Calu3 (cell line): ENCODE measurements at regions of chr17 and their contacts with region 1.

Region 1: DNA sequence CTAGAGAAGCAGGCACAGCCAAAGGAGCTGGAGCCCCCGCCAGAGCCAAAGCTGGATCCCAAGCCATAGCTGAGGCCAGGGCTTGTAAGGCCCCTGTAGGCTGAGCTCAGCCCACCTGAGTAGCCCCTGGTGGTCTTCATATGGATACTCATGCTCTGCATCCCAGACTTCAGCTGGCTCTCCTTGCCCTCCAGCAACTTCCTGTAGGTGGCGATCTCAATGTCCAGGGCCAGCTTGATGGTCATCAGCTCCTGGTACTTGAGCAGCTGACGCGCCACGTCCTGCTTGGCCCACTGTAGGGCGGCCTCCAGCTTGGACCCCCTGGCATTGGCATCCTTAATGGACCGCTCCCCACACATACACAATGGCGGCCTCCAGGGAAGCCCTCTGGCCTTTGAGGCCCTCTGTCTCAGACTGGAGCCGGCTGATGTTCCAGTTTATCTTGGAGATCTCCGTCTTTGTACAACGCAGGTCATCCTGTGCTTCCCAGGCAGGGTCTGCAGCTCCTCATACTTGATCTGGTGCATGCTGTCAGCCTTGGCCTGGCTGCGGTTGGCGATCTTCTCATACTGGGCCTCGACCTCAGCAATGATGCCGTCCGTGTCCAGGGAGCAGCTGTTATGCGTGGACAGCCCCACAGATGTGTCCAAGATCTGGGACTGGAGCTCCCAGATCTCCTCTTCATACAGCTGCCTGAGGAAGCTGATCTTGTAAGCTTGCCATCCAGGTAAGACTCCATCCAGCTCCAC is 28.9 kb downstream of the IKZF3 start:
- DNase-seq: peak; percentile 79
- H3K4me3 Mint-ChIP-seq: no peak overlapping the region
- H3K27ac Mint-ChIP-seq: no peak overlapping the region
- H3K4me1 Mint-ChIP-seq: no peaks in the 10 kb centered on the region
- H3K27me3 Mint-ChIP-seq: no peaks in the 10 kb centered on the region
- CTCF ChIP-seq: no peak

Region 2: GRCh38 chr17:39631403-39631802 is 203.8 kb before region 1 on chr17:
- CTCF ChIA-PET with region 1: interaction called, 272 read pairs
- intact Hi-C with region 1: no loop called
- DNase-seq: no peak
- H3K4me3 Mint-ChIP-seq: peak overlapping the region; percentile 0
- H3K27ac Mint-ChIP-seq: peak overlapping the region; percentile 0
- H3K4me1 Mint-ChIP-seq: peaks cover 34% of the 10 kb centered on the region
- H3K27me3 Mint-ChIP-seq: peaks cover 59% of the 10 kb centered on the region
- CTCF ChIP-seq: no peak

Region 3: DNA sequence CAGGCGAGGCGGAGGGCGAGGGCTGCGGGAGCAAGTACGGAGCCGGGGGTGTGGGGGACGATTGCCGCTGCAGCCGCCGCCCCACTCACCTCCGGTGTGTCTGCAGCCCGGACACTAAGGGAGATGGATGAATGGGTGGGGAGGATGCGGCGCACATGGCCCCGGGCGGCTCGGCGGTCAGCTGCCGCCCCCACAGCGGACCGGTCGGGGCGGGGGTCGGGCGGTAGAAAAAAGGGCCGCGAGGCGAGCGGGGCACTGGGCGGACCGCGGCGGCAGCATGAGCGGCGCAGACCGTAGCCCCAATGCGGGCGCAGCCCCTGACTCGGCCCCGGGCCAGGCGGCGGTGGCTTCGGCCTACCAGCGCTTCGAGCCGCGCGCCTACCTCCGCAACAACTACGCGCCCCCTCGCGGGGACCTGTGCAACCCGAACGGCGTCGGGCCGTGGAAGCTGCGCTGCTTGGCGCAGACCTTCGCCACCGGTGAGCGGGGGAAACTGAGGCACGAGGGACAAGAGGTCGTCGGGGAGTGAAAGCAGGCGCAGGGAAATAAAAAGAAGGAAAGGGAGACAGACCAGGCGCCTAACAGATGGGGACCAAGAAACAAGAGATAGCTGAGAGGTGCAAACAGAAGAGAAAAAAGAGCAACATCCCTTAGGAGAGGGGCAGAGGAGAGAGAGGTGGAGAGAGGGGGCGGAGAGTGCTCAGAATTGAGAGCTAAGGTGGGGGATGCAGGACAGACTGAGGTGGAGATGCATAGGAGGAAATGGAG is 166.8 kb before region 1 on chr17 and contains the start of gene PNMT:
- CTCF ChIA-PET with region 1: interaction called, 109 read pairs
- intact Hi-C with region 1: no loop called
- DNase-seq: peak; percentile 100
- H3K4me3 Mint-ChIP-seq: peak within 1 kb of the TSS; percentile 24
- H3K27ac Mint-ChIP-seq: peak within 1 kb of the TSS; percentile 0
- H3K4me1 Mint-ChIP-seq: peaks cover 65% of the 10 kb centered on the region
- H3K27me3 Mint-ChIP-seq: peaks cover 69% of the 10 kb centered on the region
- CTCF ChIP-seq: no peak
- total RNA-seq, gene PNMT: 1.3 and 3.2 TPM in 2 replicates

Region 4: DNA sequence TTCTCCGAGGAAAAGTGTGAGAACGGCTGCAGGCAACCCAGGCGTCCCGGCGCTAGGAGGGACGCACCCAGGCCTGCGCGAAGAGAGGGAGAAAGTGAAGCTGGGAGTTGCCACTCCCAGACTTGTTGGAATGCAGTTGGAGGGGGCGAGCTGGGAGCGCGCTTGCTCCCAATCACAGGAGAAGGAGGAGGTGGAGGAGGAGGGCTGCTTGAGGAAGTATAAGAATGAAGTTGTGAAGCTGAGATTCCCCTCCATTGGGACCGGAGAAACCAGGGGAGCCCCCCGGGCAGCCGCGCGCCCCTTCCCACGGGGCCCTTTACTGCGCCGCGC is 135.4 kb before region 1 on chr17 and contains the start of gene ERBB2:
- CTCF ChIA-PET with region 1: interaction called, 274 read pairs
- intact Hi-C with region 1: no loop called
- DNase-seq: peak; percentile 100
- H3K4me3 Mint-ChIP-seq: peak within 1 kb of the TSS; percentile 71
- H3K27ac Mint-ChIP-seq: peak within 1 kb of the TSS; percentile 67
- H3K4me1 Mint-ChIP-seq: peaks cover 68% of the 10 kb centered on the region
- H3K27me3 Mint-ChIP-seq: no peaks in the 10 kb centered on the region
- CTCF ChIP-seq: no peak
- total RNA-seq, gene ERBB2: 4,829 and 4,830 TPM in 2 replicates

Region 5: GRCh38 chr17:39822051-39822451 is 13.2 kb before region 1 on chr17:
- CTCF ChIA-PET with region 1: interaction called, 809 read pairs
- intact Hi-C with region 1: no loop called
- DNase-seq: peak; percentile 59
- H3K4me3 Mint-ChIP-seq: no peak overlapping the region
- H3K27ac Mint-ChIP-seq: no peak overlapping the region
- H3K4me1 Mint-ChIP-seq: peaks cover 9% of the 10 kb centered on the region
- H3K27me3 Mint-ChIP-seq: no peaks in the 10 kb centered on the region
- CTCF ChIP-seq: no peak

Region 6: GRCh38 chr17:39903158-39903884 is 68.1 kb after region 1 on chr17:
- CTCF ChIA-PET with region 1: interaction called, 1,004 read pairs
- intact Hi-C with region 1: no loop called
- DNase-seq: peak; percentile 66
- H3K4me3 Mint-ChIP-seq: no peak overlapping the region
- H3K27ac Mint-ChIP-seq: no peak overlapping the region
- H3K4me1 Mint-ChIP-seq: peaks cover 12% of the 10 kb centered on the region
- H3K27me3 Mint-ChIP-seq: no peaks in the 10 kb centered on the region
- CTCF ChIP-seq: no peak

Region 7: DNA sequence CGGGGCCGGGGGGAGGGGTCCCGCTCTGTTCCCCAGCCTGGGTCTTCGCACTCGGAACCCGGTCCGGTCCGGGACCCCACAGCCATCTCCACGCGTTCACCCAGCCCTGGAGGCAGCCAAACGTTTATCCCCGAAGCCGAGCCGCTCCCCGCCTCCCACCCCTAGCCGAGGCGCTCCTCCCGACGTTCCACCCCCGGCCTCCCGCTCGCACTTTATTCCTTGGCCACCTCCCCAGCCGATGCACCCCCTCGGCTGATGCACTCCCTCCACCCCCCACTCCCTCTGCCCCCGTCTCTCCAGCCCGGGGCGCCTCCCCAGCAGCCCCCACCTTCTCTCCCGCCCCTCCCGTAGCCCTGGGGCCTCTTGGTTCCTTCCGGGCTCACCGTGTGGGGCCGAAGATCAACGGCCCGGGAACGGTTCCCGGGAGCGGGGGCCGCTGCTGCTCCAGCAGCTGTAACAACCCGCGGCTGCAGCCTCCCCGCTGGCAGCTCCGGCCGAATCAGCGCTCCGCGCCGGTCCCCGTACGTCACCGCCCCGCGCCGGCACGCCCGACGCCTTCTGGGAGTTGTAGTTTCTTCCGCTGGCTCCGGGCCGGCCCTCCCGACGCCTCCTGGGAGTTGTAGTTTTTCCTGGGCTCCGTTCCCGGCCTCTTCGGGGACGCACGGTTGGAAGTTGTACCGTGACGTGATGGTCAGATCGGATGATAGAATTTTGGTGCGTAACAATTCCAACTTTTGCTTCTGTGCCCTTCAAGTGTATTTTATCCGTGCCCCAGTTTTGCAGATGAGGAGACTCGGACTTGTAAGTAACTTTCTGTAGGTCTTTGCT is 92.1 kb after region 1 on chr17 and contains the starts of genes LRRC3C and ORMDL3:
- CTCF ChIA-PET with region 1: interaction called, 43 read pairs
- intact Hi-C with region 1: no loop called
- DNase-seq: no peak
- H3K4me3 Mint-ChIP-seq: peak within 1 kb of the TSS; percentile 74
- H3K27ac Mint-ChIP-seq: peak within 1 kb of the TSS; percentile 66
- H3K4me1 Mint-ChIP-seq: peaks cover 60% of the 10 kb centered on the region
- H3K27me3 Mint-ChIP-seq: no peaks in the 10 kb centered on the region
- CTCF ChIP-seq: no peak
- total RNA-seq, gene LRRC3C: not detected in 2 replicates
- total RNA-seq, gene ORMDL3: 1,738 and 1,968 TPM in 2 replicates